Caco-2 (cell line): ENCODE measurements at regions of chr2 and their contacts with region 1.

Region 1: GRCh38 chr2:162091325-162092007 is 17.5 kb upstream of the DPP4 start:
- DNase-seq: peak; percentile 85 to 91
- H3K4me3 ChIP-seq: no peak overlapping the region
- H3K4me3 Mint-ChIP-seq: no peak overlapping the region
- H3K27ac Mint-ChIP-seq: peak overlapping the region; percentile 11
- H3K4me1 ChIP-seq: peaks cover 48% of the 10 kb centered on the region
- H3K4me1 Mint-ChIP-seq: peaks cover 40% of the 10 kb centered on the region
- H3K27me3 ChIP-seq: no peaks in the 10 kb centered on the region
- H3K27me3 Mint-ChIP-seq: no peaks in the 10 kb centered on the region
- CTCF ChIP-seq: peak in 1 of 2 experiments; percentile 88

Region 2: DNA sequence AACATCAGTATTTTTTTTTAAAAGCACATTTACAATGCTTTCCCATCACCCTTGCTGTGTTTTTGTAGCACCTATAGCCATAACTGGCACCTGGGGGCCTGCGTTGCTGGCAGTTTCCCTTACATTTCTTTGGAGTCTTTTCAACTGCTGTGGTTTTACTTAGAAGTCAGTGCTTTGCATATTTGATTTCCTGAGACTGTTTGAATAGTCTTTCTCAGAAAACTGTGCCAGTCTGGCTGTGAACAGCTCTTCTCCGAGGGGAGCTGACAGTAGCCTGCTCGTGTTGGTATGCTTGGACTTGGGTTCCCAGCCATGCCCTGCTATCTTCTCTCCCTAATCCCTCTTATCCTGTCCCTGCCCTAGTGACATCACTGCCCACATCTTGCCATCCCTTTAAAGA is 98.9 kb before region 1 on chr2:
- CTCF ChIA-PET with region 1: no interaction called
- POLR2A ChIA-PET with region 1: no interaction called
- intact Hi-C with region 1: no loop called
- DNase-seq: no peak
- H3K4me3 ChIP-seq: no peak overlapping the region
- H3K4me3 Mint-ChIP-seq: no peak overlapping the region
- H3K27ac Mint-ChIP-seq: no peak overlapping the region
- H3K4me1 ChIP-seq: peaks cover 12% of the 10 kb centered on the region
- H3K4me1 Mint-ChIP-seq: peaks cover 9% of the 10 kb centered on the region
- H3K27me3 ChIP-seq: no peaks in the 10 kb centered on the region
- H3K27me3 Mint-ChIP-seq: no peaks in the 10 kb centered on the region
- CTCF ChIP-seq: no peak

Region 3: GRCh38 chr2:162041485-162041884 is 50.0 kb before region 1 on chr2:
- CTCF ChIA-PET with region 1: no interaction called
- POLR2A ChIA-PET with region 1: no interaction called
- intact Hi-C with region 1: loop called (anchors 2 kb)
- DNase-seq: no peak
- H3K4me3 ChIP-seq: no peak overlapping the region
- H3K4me3 Mint-ChIP-seq: no peak overlapping the region
- H3K27ac Mint-ChIP-seq: no peak overlapping the region
- H3K4me1 ChIP-seq: no peaks in the 10 kb centered on the region
- H3K4me1 Mint-ChIP-seq: no peaks in the 10 kb centered on the region
- H3K27me3 ChIP-seq: no peaks in the 10 kb centered on the region
- H3K27me3 Mint-ChIP-seq: no peaks in the 10 kb centered on the region
- CTCF ChIP-seq: no peak

Region 4: GRCh38 chr2:162073888-162074645 is 17.4 kb before region 1 on chr2 and contains the start of gene DPP4:
- CTCF ChIA-PET with region 1: interaction called, 5 read pairs
- POLR2A ChIA-PET with region 1: no interaction called
- intact Hi-C with region 1: loop called (anchors 1 kb)
- DNase-seq: peak; percentile 87 to 89
- H3K4me3 ChIP-seq: peak within 1 kb of the TSS; percentile 95
- H3K4me3 Mint-ChIP-seq: peak within 1 kb of the TSS; percentile 87
- H3K27ac Mint-ChIP-seq: peak within 1 kb of the TSS; percentile 54
- H3K4me1 ChIP-seq: peaks cover 55% of the 10 kb centered on the region
- H3K4me1 Mint-ChIP-seq: peaks cover 39% of the 10 kb centered on the region
- H3K27me3 ChIP-seq: no peaks in the 10 kb centered on the region
- H3K27me3 Mint-ChIP-seq: no peaks in the 10 kb centered on the region
- CTCF ChIP-seq: no peak
- total RNA-seq, gene DPP4: 190 and 199 TPM in 2 replicates

Region 5: DNA sequence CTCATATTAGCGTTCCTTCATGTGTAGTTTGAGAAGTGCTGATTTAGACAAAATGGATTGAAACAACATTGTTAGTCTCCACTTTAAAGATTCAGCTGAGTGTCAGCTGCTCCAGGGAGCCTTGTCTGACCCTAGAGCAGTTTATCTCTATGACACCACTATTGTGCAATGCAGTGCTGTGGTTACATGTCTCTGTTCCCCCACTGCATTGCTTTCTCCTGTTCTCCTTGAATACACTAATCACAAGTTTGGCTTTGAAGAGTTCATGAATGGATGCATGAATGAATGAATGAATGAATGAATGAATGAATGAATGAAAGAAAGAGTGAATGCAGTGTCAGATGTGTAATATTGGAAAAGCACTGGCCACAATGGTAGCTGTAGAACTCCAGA is 22.3 kb after region 1 on chr2:
- CTCF ChIA-PET with region 1: no interaction called
- POLR2A ChIA-PET with region 1: no interaction called
- intact Hi-C with region 1: loop called (anchors 1 kb)
- DNase-seq: peak; percentile 75 to 78
- H3K4me3 ChIP-seq: no peak overlapping the region
- H3K4me3 Mint-ChIP-seq: peak overlapping the region; percentile 38
- H3K27ac Mint-ChIP-seq: peak overlapping the region; percentile 82
- H3K4me1 ChIP-seq: peaks cover 66% of the 10 kb centered on the region
- H3K4me1 Mint-ChIP-seq: peaks cover 32% of the 10 kb centered on the region
- H3K27me3 ChIP-seq: no peaks in the 10 kb centered on the region
- H3K27me3 Mint-ChIP-seq: no peaks in the 10 kb centered on the region
- CTCF ChIP-seq: no peak